Caco-2 (cell line): ENCODE measurements at regions of chr7 and their contacts with region 1.

Region 1: GRCh38 chr7:6706677-6707544 is at the start of gene ZNF12:
- DNase-seq: peak; percentile 97
- H3K4me3 ChIP-seq: peak within 1 kb of the TSS; percentile 85
- H3K4me3 Mint-ChIP-seq: peak within 1 kb of the TSS; percentile 88
- H3K27ac Mint-ChIP-seq: peak within 1 kb of the TSS; percentile 79
- H3K4me1 ChIP-seq: no peaks in the 10 kb centered on the region
- H3K4me1 Mint-ChIP-seq: peaks cover 8% of the 10 kb centered on the region
- H3K27me3 ChIP-seq: no peaks in the 10 kb centered on the region
- H3K27me3 Mint-ChIP-seq: no peaks in the 10 kb centered on the region
- CTCF ChIP-seq: no peak
- total RNA-seq, gene ZNF12: 26.1 and 30.4 TPM in 2 replicates

Region 2: GRCh38 chr7:6637544-6638229 is 69.2 kb before region 1 on chr7:
- CTCF ChIA-PET with region 1: no interaction called
- POLR2A ChIA-PET with region 1: no interaction called
- intact Hi-C with region 1: loop called (anchors 2 kb)
- DNase-seq: peak; percentile 54 to 71
- H3K4me3 ChIP-seq: peak overlapping the region; percentile 97
- H3K4me3 Mint-ChIP-seq: peak overlapping the region; percentile 72
- H3K27ac Mint-ChIP-seq: no peak overlapping the region
- H3K4me1 ChIP-seq: peaks cover 4% of the 10 kb centered on the region
- H3K4me1 Mint-ChIP-seq: peaks cover 11% of the 10 kb centered on the region
- H3K27me3 ChIP-seq: no peaks in the 10 kb centered on the region
- H3K27me3 Mint-ChIP-seq: no peaks in the 10 kb centered on the region
- CTCF ChIP-seq: peak; percentile 61 to 81

Region 3: GRCh38 chr7:6718124-6718523 is 11.2 kb after region 1 on chr7:
- CTCF ChIA-PET with region 1: no interaction called
- POLR2A ChIA-PET with region 1: no interaction called
- intact Hi-C with region 1: no loop called
- DNase-seq: no peak
- H3K4me3 ChIP-seq: no peak overlapping the region
- H3K4me3 Mint-ChIP-seq: no peak overlapping the region
- H3K27ac Mint-ChIP-seq: no peak overlapping the region
- H3K4me1 ChIP-seq: no peaks in the 10 kb centered on the region
- H3K4me1 Mint-ChIP-seq: no peaks in the 10 kb centered on the region
- H3K27me3 ChIP-seq: no peaks in the 10 kb centered on the region
- H3K27me3 Mint-ChIP-seq: peaks cover 16% of the 10 kb centered on the region
- CTCF ChIP-seq: no peak

Region 4: GRCh38 chr7:6729492-6730342 is 22.8 kb after region 1 on chr7:
- CTCF ChIA-PET with region 1: no interaction called
- POLR2A ChIA-PET with region 1: no interaction called
- intact Hi-C with region 1: loop called (anchors 1 kb)
- DNase-seq: peak; percentile 91 to 93
- H3K4me3 ChIP-seq: peak overlapping the region; percentile 65
- H3K4me3 Mint-ChIP-seq: peak overlapping the region; percentile 98
- H3K27ac Mint-ChIP-seq: peak overlapping the region; percentile 84
- H3K4me1 ChIP-seq: 0 out of 2 replicates have a peak, but pooled peaks cover 3% of the 10 kb centered on the region
- H3K4me1 Mint-ChIP-seq: no peaks in the 10 kb centered on the region
- H3K27me3 ChIP-seq: no peaks in the 10 kb centered on the region
- H3K27me3 Mint-ChIP-seq: no peaks in the 10 kb centered on the region
- CTCF ChIP-seq: no peak

Region 5: GRCh38 chr7:7014827-7015610 is 308.1 kb after region 1 on chr7:
- CTCF ChIA-PET with region 1: no interaction called
- POLR2A ChIA-PET with region 1: no interaction called
- intact Hi-C with region 1: no loop called
- DNase-seq: no peak
- H3K4me3 ChIP-seq: no peak overlapping the region
- H3K4me3 Mint-ChIP-seq: no peak overlapping the region
- H3K27ac Mint-ChIP-seq: no peak overlapping the region
- H3K4me1 ChIP-seq: peaks cover 14% of the 10 kb centered on the region
- H3K4me1 Mint-ChIP-seq: no peaks in the 10 kb centered on the region
- H3K27me3 ChIP-seq: no peaks in the 10 kb centered on the region
- H3K27me3 Mint-ChIP-seq: no peaks in the 10 kb centered on the region
- CTCF ChIP-seq: no peak